Right ventricle myocardium inferior (tissue), 1 donor: ENCODE measurements at regions of chr2 and their contacts with region 1.

Region 1: GRCh38 chr2:42881732-42882131 is 89.3 kb upstream of the HAAO start:
- DNase-seq: no peak
- ATAC-seq: no peak

Region 2: DNA sequence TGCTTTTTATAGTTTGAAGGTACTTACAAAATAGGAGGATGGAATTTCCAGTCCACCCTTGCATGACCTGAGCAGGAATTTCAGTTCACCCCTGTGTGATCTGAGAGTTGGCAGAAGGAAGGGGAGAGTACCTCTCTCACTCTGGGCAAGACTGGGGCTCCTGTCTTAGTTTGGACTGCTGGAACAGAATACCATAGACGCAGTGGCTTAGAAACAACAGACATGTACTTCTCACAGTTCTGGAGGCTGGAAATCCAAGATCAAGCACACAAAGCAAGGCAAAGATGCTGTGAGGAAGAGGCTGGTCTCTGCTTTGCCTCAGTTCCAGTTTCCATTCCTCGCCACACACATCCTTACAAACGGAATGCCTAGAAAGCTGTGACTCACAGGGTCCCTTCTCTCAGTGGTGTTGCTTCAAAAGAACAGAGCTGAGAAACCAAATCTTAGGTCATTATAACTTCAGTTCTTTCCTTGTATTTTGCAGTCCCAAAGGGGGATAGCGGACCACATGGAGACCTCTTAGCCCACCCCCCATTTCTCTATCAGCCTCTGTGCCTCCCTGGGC is 19.4 kb after region 1 on chr2:
- intact Hi-C with region 1: loop called (anchors 2 kb)
- DNase-seq: no peak
- ATAC-seq: no peak